Lower leg skin (tissue), 4 donors: ENCODE measurements at regions of chr4 and their contacts with region 1.

Region 1: DNA sequence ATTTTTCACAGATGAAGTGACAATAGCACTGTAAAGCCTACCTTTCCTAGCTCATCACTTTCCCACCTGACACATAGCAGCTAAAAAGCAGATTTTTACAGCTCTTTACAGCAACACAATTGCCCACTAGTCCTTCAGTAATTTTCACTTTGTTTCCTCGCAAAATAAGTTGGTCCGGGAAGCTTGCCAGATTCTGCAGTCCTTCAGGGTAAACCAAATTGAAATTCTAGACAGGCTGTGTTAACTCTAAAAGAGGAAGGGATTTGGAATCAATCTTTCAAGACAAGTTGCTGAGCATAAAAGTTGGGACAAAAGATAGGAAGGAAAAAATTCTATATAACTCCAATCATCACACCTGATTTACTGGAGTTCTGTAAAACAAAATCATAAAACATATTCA is 8.7 kb downstream of the C1QTNF7 start:
- DNase-seq: no peak
- H3K4me3 ChIP-seq: no peak overlapping the region
- CTCF ChIP-seq: no peak
- POLR2A ChIP-seq: no peak

Region 2: DNA sequence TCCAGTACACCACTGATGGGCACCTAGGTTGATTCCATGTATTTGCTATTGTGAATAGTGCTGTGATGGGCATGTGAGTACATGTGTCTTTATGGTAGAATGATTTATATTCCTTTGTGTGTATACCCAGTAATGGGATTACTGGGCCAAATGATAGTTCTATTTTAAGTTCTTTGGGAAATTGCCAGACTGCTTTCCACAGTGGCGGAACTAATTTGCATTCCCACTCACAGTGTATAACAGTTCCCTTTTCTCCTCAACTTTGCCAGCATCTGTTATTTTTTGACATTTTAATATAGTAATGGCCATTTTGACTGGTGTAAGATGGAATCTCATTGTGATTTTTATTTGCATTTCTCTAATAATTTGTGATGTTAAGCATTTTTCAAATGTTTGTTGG is 59.1 kb after region 1 on chr4:
- intact Hi-C with region 1: loop called (anchors 2 kb)
- DNase-seq: no peak
- H3K4me3 ChIP-seq: no peak overlapping the region
- CTCF ChIP-seq: no peak
- POLR2A ChIP-seq: no peak